ENCODE measurements at regions of chr10 and their contacts with region 1.

Region 1: GRCh38 chr10:116787893-116788665 is 45.7 kb upstream of the HSPA12A start:
- DNase-seq: peak; percentile 57
- H3K4me3 Mint-ChIP-seq: peak overlapping the region; percentile 69
- H3K27ac Mint-ChIP-seq: no peak overlapping the region
- H3K4me1 Mint-ChIP-seq: peaks cover 6% of the 10 kb centered on the region
- H3K27me3 Mint-ChIP-seq: no peaks in the 10 kb centered on the region
- CTCF ChIP-seq: peak; percentile 98

Region 2: DNA sequence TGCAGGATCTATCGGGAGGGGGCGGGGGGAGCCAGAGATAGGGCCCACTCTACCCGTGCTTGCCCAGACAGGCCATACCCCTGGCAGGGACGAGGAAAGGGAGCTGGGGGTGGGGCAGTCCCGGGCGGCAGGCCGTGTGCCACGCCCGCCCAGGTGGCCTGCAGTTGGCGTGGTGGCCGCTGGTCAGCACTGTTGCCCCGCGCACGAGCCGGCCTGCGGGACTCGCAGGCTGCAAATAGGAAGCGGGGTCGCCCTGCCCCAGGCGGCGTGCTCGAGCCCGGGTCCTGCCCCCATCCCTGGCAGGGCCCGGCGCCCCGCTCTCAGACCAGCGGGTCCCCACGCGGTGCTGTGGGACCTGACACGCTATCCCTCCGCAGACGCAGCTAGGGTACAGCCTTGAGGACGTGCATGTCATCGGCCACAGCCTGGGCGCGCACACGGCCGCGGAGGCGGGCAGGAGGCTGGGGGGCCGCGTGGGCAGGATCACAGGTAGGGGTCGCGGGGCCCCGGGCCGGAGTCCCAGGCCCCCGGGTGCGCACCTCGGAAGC is 160.6 kb before region 1 on chr10:
- CTCF ChIA-PET with region 1: interaction called, 38 read pairs
- POLR2A ChIA-PET with region 1: no interaction called
- intact Hi-C with region 1: loop called (anchors 1 kb)
- DNase-seq: peak; percentile 8
- H3K4me3 Mint-ChIP-seq: no peak overlapping the region
- H3K27ac Mint-ChIP-seq: no peak overlapping the region
- H3K4me1 Mint-ChIP-seq: no peaks in the 10 kb centered on the region
- H3K27me3 Mint-ChIP-seq: peaks cover 5% of the 10 kb centered on the region
- CTCF ChIP-seq: no peak

Region 3: GRCh38 chr10:116683821-116684220 is 104.3 kb before region 1 on chr10:
- CTCF ChIA-PET with region 1: interaction called, 339 read pairs
- POLR2A ChIA-PET with region 1: interaction called, 23 read pairs
- intact Hi-C with region 1: loop called (anchors 1 kb)
- DNase-seq: no peak
- H3K4me3 Mint-ChIP-seq: no peak overlapping the region
- H3K27ac Mint-ChIP-seq: no peak overlapping the region
- H3K4me1 Mint-ChIP-seq: peaks cover 6% of the 10 kb centered on the region
- H3K27me3 Mint-ChIP-seq: no peaks in the 10 kb centered on the region
- CTCF ChIP-seq: no peak

Region 4: GRCh38 chr10:116721547-116722392 is 66.3 kb before region 1 on chr10:
- CTCF ChIA-PET with region 1: interaction called, 46 read pairs
- POLR2A ChIA-PET with region 1: no interaction called
- intact Hi-C with region 1: no loop called
- DNase-seq: no peak
- H3K4me3 Mint-ChIP-seq: no peak overlapping the region
- H3K27ac Mint-ChIP-seq: no peak overlapping the region
- H3K4me1 Mint-ChIP-seq: no peaks in the 10 kb centered on the region
- H3K27me3 Mint-ChIP-seq: no peaks in the 10 kb centered on the region
- CTCF ChIP-seq: no peak

Region 5: GRCh38 chr10:116761883-116762282 is 26.2 kb before region 1 on chr10:
- CTCF ChIA-PET with region 1: interaction called, 15 read pairs
- POLR2A ChIA-PET with region 1: interaction called, 3 read pairs
- intact Hi-C with region 1: no loop called
- DNase-seq: no peak
- H3K4me3 Mint-ChIP-seq: no peak overlapping the region
- H3K27ac Mint-ChIP-seq: no peak overlapping the region
- H3K4me1 Mint-ChIP-seq: no peaks in the 10 kb centered on the region
- H3K27me3 Mint-ChIP-seq: no peaks in the 10 kb centered on the region
- CTCF ChIP-seq: no peak

Region 6: DNA sequence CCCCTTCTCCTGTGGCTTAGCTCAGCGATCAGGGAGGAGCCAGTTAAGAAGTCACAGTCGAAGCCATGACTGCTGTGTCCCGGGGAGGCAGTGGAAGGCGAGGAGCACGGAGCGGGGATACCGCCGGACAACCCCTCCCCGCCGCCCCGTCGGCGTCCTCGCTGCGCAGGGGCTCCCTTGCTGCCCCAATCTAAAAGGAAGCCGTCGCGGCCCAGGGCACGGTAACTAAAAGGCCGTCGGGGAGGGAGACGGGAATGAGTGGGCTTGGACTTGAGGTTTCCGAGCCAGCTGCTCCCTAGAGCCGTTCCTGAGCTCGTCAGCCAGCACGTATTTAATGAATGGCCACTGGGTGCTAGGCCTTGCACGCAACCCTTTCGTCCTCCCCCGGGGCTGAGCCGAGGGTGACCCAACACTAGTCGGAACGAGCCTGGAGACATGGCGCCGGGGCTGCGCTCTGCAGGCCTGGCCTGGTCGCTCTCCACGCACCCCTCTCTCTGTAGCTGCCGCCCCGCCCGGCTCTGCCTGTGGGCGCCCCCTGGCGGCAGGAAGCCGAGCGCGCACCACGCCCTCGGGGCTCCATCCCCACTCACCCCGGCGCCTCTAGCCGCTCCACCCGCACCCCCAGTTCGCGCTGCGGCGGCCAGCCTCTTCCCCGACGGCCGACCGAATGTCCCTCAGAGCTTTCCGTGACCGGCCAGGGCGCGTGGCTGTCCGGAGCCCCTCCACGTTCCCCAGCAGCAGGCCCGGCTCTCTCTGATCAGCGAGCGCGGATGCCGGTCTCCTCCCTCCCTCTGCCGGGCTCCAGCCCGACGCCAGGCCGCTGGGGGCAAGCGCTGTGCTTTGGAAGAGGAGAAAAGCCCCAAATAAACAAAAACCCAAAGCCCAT is 380.0 kb after region 1 on chr10:
- CTCF ChIA-PET with region 1: interaction called, 578 read pairs
- POLR2A ChIA-PET with region 1: no interaction called
- intact Hi-C with region 1: no loop called
- DNase-seq: peak; percentile 43
- H3K4me3 Mint-ChIP-seq: peak overlapping the region; percentile 14
- H3K27ac Mint-ChIP-seq: no peak overlapping the region
- H3K4me1 Mint-ChIP-seq: no peaks in the 10 kb centered on the region
- H3K27me3 Mint-ChIP-seq: peaks cover 35% of the 10 kb centered on the region
- CTCF ChIP-seq: peak; percentile 95